Activated CD8-positive, alpha-beta T cell treated with anti-CD3 and anti-CD28 coated beads, Interleukin-2, amount 10 ng/mL, durations not matched to agents 7 days and 5 days (primary cell): ENCODE measurements at regions of chr11 and their contacts with region 1.

Region 1: GRCh38 chr11:78000193-78000592 is 5.7 kb upstream of the INTS4 start:
- DNase-seq: peak; percentile 68
- ATAC-seq: peak; percentile 83
- H3K4me3 Mint-ChIP-seq: no peak overlapping the region
- H3K27ac Mint-ChIP-seq: no peak overlapping the region
- H3K4me1 Mint-ChIP-seq: peaks cover 11% of the 10 kb centered on the region
- H3K27me3 Mint-ChIP-seq: peaks cover 3% of the 10 kb centered on the region

Region 2: GRCh38 chr11:78019821-78020220 is 19.6 kb after region 1 on chr11:
- CTCF ChIA-PET with region 1: no interaction called
- POLR2A ChIA-PET with region 1: no interaction called
- DNase-seq: no peak
- ATAC-seq: no peak
- H3K4me3 Mint-ChIP-seq: no peak overlapping the region
- H3K27ac Mint-ChIP-seq: no peak overlapping the region
- H3K4me1 Mint-ChIP-seq: peaks cover 3% of the 10 kb centered on the region
- H3K27me3 Mint-ChIP-seq: peaks cover 22% of the 10 kb centered on the region

Region 3: DNA sequence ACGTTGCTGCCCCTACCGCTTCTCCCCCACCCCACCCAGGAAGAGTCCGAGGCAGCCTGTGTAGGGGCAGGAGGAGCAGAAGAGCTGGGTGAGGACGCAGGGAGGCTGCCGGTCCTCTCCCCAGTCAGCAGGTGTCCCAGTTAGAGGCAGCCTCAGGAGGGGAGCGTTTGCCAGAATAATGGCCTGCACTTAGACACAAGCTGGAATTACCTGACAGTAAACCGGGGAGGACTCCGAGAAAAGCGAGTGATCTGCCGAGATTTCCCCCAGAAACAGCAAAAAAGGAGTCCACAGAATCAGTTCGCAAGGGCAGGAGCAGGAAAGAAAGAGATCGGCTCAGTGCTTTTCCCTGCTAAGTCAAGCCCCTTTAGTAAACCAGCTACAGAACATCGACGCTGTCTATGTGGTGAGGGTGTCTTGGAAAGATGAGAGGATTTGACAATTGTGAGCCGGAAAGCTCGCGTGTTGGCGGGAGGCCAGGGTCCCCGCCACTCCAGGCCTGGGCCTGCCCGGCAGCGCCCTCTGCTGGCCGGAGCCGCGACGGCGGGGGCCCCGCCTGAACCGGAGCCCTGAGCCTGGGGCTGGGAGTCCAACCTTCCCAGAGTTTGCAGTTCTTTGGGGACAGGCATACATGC is 45.8 kb after region 1 on chr11:
- CTCF ChIA-PET with region 1: interaction called, 21 read pairs
- POLR2A ChIA-PET with region 1: interaction called, 3 read pairs
- DNase-seq: peak; percentile 77
- ATAC-seq: peak; percentile 99
- H3K4me3 Mint-ChIP-seq: peak overlapping the region; percentile 49
- H3K27ac Mint-ChIP-seq: peak overlapping the region; percentile 39
- H3K4me1 Mint-ChIP-seq: peaks cover 17% of the 10 kb centered on the region
- H3K27me3 Mint-ChIP-seq: no peaks in the 10 kb centered on the region